HAP-1 (cell line): ENCODE measurements at regions of chr15 and their contacts with region 1.

Region 1: GRCh38 chr15:55221090-55222011 is 24.6 kb upstream of the RSL24D1 start:
- DNase-seq: no peak
- H3K4me3 ChIP-seq: no peak overlapping the region
- H3K4me1 ChIP-seq: no peaks in the 10 kb centered on the region
- H3K27me3 ChIP-seq: no peaks in the 10 kb centered on the region

Region 2: GRCh38 chr15:55289721-55290527 is 68.6 kb after region 1 on chr15 and contains the start of gene RAB27A:
- in situ Hi-C with region 1: loop called (anchors 5 kb)
- DNase-seq: peak; percentile 67 to 84
- H3K4me3 ChIP-seq: peak within 1 kb of the TSS; percentile 57
- H3K4me1 ChIP-seq: peaks cover 6% of the 10 kb centered on the region
- H3K27me3 ChIP-seq: no peaks in the 10 kb centered on the region

Region 3: DNA sequence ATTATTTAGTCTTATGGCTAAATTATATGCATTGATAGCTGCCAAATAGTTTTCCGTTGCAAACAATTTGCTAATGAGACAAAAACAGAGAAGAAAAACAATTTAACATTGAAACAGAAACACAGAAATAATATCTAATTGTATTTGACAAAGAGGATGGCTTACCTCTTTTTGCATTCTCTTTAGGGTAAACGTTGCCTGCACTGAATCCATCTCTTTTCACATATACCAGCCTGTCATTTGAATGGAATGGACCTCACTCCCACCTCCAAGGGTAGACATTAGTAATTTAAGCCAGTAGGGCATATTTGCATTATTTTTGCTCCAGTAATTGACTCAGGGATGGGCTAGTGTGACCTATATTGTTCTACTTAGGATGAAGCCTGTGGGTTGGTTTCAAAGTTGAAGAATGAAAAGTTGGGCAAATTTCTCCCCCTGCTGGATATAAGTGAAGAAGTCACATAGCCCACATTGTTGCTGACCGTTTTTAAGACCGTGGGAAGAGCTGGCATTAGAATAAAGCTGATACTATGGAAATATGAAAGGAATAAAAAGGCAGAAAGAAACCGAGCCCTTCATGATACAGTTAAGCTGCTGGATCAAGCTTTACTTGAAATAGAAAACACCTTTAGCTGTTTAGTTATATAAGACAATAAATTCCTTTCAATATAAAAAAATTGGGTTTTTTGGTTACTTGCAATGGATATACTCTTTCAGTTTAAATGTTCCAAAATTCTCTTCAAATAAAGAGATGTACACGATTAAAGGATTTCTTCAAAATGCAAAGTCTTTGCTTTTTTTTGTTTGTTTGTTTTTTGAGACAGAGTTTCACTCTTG is 213.9 kb after region 1 on chr15:
- in situ Hi-C with region 1: loop called (anchors 5 kb)
- DNase-seq: peak; percentile 31 to 62
- H3K4me3 ChIP-seq: no peak overlapping the region
- H3K4me1 ChIP-seq: no peaks in the 10 kb centered on the region
- H3K27me3 ChIP-seq: no peaks in the 10 kb centered on the region

Region 4: DNA sequence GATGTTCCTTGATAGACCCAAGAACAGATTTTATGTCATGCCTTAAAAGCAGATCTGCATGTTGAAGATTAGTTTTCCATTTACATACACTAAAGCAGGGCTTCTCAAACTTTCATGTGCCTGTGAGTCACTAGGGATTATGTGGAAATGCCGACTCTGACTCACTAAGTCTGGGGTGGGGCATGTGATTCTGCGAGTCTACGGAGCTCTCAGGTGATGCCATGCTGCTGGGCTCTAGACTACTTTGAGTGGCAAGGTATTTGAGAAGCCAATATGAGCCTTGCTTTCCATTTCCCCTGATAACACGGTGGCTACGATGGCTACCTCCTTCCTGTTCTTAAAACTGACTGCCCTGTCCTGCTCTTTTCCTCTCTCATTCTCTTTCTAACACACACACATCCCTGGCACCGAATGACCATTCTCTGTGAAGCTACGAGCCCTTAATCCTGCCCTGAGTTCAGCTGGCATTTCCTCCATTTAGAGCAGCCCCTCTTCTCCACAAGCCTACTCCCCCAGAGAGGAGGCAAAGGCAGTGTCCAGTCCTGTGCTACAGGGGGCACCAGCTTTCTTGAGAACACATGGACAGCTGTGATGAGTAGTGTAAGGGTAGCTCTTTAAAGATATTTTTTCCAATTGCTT is 406.5 kb after region 1 on chr15:
- in situ Hi-C with region 1: loop called (anchors 25 kb)
- DNase-seq: peak; percentile 24 to 29
- H3K4me3 ChIP-seq: no peak overlapping the region
- H3K4me1 ChIP-seq: no peaks in the 10 kb centered on the region; the same call in 1 of the 2 replicates
- H3K27me3 ChIP-seq: no peaks in the 10 kb centered on the region

Region 5: GRCh38 chr15:56016281-56016680 is 794.9 kb after region 1 on chr15:
- in situ Hi-C with region 1: no loop called
- DNase-seq: no peak
- H3K4me3 ChIP-seq: no peak overlapping the region
- H3K4me1 ChIP-seq: no peaks in the 10 kb centered on the region
- H3K27me3 ChIP-seq: no peaks in the 10 kb centered on the region